ENCODE measurements at regions of chr1 and their contacts with region 1.

Region 1: DNA sequence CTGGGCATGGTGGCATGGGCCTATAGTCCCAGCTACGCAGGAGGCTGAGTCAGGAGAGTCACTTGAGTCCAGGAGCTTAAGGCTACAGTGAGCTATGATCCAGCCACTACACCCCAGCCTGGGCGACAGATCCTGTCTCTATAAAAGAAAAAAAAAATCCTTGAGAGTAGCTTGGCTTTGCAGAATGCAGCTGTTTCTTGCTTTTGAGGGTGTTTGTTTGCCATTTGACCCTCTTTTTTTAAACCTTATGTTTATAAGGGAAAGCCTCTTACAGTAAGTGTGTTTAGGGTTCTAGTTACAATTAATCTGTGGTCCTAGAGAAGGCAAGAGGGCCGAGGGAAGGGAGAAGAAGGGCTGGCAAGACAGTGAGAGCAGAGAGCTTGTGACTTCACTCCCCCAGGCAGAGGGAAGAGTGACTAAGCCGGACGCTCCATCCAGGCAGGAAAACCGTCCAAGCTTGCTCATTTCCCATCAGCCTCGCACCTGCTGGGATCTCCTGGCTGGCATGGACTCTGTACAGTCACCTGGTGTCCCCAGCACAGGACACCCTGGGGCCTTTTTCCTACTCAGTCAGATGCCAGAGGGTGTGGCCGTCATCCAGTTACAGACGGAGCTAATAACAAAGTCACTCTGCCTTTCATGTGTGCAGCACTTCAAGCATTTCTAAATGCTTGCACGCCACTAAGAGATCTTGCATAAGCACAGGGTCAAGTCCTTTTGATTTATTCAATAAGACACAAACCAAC is 55.5 kb upstream of the PSEN2 start:
- DNase-seq: peak in 2 of 3 donors; percentile 38 to 69
- ATAC-seq: peak; percentile 77 to 84
- H3K4me3 ChIP-seq: no peak overlapping the region
- H3K27ac ChIP-seq: peak overlapping the region; percentile 84
- H3K4me1 ChIP-seq: peaks cover 2% of the 10 kb centered on the region
- H3K27me3 ChIP-seq: no peaks in the 10 kb centered on the region

Region 2: DNA sequence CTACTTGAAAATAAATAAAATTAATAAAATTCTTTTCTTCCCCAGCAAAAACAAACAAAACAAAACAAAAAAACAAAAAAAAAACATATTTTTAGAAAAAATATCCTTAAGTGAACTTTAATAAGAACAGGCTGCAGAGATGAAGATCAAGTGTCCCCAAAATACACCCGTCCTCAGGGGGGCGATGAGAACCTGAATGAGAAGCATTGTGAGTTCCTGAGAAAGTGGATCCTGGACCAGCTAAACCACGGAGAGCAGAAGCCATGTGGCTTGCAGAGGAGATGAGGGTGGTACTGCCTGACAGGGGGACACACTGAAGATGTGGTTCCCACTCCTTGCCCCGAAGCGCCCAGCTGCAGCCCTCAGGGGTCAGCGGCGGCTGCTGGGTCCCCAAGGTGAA is 165.1 kb before region 1 on chr1:
- intact Hi-C with region 1: loop called in 1 of 4 experiments (anchors 5 kb)
- DNase-seq: peak; percentile 22 to 68 (median 33)
- ATAC-seq: peak in 1 of 2 donors; percentile 18
- H3K4me3 ChIP-seq: no peak overlapping the region
- H3K27ac ChIP-seq: peak overlapping the region; percentile 29
- H3K4me1 ChIP-seq: peaks cover 22% of the 10 kb centered on the region
- H3K27me3 ChIP-seq: no peaks in the 10 kb centered on the region

Region 3: GRCh38 chr1:226973898-226974543 is 159.1 kb after region 1 on chr1:
- intact Hi-C with region 1: no loop called
- DNase-seq: peak; percentile 73 to 83 (median 77)
- ATAC-seq: peak; percentile 76 to 78
- H3K4me3 ChIP-seq: no peak overlapping the region
- H3K27ac ChIP-seq: peak overlapping the region; percentile 99
- H3K4me1 ChIP-seq: peaks cover 28% of the 10 kb centered on the region
- H3K27me3 ChIP-seq: no peaks in the 10 kb centered on the region